HEK293 (cell line): ENCODE measurements at regions of chr11 and their contacts with region 1.

Region 1: DNA sequence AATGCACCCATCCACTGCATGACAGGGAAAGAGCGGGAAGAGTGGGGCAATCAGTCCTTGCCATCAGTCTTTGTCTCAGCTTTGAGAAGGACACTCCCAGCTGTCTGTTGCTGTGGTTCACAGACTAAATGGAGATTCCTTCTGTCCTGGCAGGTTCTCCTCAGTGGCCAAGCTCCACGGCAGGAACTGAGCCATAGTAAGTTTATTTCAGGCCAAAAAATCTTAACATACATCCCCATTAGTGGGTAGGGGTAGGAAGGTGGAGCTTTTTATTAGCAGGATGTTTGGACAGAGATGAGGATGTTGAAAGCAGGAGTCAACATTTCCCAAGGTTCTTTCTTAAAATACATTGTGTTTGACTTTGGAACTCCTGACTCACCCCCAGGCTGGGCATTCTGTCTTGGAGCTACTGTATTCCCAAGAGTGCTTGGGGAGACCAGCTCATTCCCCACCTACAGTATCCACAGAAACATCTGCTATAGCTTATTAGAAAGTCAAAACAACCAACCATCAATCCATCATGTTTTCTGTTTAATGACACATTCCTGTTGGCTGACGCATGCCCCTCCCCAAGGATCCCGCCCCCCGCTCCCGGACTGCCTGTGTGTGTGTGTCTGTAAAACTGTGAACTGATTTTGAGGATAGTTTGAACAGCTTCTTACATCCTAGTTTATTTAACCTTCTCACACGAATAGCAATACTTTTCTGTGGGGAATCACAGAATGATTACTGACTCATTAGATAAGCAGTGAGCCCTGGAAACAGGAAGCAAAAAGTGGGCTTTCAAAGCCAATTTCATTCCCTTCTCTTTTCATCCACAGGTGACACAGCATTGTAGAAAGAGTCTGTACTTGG is 109.5 kb downstream of the CCDC81 start:
- H3K4me3 ChIP-seq: no peak overlapping the region
- H3K27ac ChIP-seq: peak overlapping the region; percentile 61
- H3K4me1 ChIP-seq: peaks cover 3% of the 10 kb centered on the region; the same call in 1 of the 2 replicates
- CTCF ChIP-seq: no peak

Region 2: DNA sequence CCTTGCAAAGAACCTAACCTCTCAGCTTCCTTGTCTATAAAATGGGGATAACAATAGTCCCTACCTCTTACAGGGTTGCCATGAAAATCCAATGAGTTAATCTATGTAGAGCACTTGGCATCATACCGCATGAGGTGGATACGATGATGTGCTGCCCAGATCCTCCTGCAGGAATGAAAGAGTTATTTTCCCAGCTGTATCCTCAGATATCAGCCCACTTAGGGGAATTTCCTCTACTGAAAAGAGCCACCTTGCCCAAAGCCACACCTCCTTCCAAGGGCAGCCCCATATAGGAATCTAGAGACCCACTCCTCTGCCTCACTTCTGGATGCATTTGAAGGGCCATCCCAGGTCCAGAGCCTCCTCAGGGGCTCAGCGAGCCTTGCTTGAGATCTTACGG is 19.0 kb after region 1 on chr11:
- CTCF ChIA-PET with region 1: interaction called, 4 read pairs
- POLR2A ChIA-PET with region 1: interaction called, 14 read pairs
- H3K4me3 ChIP-seq: no peak overlapping the region
- H3K27ac ChIP-seq: no peak overlapping the region
- H3K4me1 ChIP-seq: no peaks in the 10 kb centered on the region
- CTCF ChIP-seq: no peak

Region 3: DNA sequence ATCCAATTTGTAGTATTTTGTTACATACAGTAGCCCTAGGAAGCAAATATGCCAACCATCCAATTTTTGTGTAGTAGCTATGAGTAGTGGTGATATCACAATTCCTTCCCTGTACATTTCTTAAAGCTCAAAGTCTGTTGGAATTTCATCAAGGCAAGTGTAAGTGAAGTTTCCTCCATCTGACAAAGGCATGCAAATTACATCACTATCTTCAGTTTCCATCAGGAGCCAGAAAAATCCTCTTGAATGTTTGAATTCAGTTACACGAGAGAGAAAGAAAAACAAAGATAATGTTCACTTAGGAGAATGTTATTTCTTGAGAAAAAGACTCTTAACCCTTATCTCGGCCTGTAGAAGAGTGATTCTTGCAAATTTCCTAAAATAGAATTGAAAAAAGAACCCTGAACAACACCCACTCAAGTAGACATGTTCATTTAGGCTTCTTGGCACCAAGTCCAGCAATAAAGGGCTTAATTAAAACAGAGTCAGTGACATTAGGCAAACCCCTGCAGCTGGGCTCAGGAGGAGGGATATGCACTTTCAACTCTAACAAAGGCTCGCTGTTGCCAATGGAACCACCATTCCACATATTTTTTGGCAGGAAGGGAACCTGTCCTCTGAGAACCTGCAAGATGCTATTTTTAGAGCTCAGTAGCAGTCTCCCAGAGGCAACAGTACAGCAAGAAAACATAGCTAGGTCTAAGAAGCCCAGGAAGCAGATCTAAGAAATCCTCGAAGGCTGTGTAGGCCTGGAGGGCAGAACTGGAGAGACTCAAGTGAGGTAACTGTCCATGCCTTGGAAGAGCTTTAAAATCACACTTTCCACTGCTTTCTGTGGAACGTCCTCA is 35.1 kb after region 1 on chr11:
- CTCF ChIA-PET with region 1: interaction called, 3 read pairs
- POLR2A ChIA-PET with region 1: interaction called, 10 read pairs
- H3K4me3 ChIP-seq: no peak overlapping the region
- H3K27ac ChIP-seq: peak overlapping the region; percentile 93
- H3K4me1 ChIP-seq: peaks cover 32% of the 10 kb centered on the region
- CTCF ChIP-seq: no peak